ENCODE measurements at regions of chr11 and their contacts with region 1.

Region 1: DNA sequence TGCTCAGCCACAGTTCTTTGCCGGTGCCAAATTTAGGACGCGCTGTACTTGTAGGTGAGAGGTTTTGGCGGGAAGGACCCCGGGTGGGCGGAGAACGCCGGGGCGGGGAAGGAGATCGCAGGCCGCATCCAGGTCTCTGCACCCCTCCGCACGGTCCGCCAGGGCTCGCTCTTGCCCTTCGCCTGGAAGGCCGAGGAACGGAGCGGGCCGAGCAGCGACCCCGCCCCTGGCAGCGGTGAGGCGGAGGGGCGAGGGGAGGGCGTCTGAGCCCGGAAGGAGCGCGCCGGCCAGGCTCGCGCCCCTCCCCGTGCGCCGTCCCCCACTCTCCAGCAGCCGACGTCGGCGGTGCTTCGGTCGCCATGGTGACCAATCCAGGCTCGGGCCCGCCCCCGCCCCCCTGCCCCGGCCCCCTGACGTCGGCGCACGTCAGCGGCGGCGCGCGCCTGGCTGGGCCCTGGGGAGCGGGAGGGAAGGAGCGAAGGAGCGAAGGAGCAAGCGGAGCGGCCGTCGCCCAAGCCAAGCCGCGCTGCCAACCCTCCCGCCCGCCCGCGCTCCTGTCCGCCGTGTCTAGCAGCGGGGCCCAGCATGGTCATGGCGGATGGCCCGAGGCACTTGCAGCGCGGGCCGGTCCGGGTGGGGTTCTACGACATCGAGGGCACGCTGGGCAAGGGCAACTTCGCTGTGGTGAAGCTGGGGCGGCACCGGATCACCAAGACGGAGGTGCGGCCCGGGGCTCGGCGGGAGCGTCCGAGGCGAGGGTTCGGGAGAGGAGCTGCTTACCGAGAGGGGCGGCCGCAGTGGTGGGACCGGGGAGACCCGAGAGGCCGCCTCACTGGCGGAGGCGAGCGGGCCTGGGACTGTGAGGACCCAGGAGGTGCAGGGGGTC is at the start of gene SIK2:
- DNase-seq: peak; percentile 93
- H3K4me3 Mint-ChIP-seq: peak within 1 kb of the TSS; percentile 97
- H3K27ac Mint-ChIP-seq: peak within 1 kb of the TSS; percentile 95
- H3K4me1 Mint-ChIP-seq: peaks cover 16% of the 10 kb centered on the region
- H3K27me3 Mint-ChIP-seq: no peaks in the 10 kb centered on the region
- CTCF ChIP-seq: peak; percentile 60
- total RNA-seq, gene SIK2: 10.3 and 13.9 TPM in 2 replicates

Region 2: DNA sequence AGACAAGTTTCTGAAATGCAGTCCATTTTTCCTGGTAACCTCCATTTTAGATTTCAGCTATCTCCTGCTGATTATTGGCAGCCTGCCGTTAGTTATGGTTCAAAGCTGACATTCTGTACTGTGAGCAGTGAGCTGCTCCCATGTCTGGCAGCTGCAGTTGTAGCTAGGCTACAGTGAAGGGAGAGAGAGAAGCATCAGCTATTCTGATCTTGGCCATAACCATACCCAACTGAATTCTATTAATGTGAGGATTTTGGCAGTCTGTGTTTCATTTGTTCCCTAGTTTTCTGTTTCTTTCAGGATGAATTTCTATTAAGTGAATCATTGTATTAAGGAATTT is 33.5 kb after region 1 on chr11:
- CTCF ChIA-PET with region 1: no interaction called
- intact Hi-C with region 1: loop called (anchors 2 kb)
- DNase-seq: no peak
- H3K4me3 Mint-ChIP-seq: no peak overlapping the region
- H3K27ac Mint-ChIP-seq: no peak overlapping the region
- H3K4me1 Mint-ChIP-seq: peaks cover 52% of the 10 kb centered on the region
- H3K27me3 Mint-ChIP-seq: no peaks in the 10 kb centered on the region
- CTCF ChIP-seq: no peak

Region 3: DNA sequence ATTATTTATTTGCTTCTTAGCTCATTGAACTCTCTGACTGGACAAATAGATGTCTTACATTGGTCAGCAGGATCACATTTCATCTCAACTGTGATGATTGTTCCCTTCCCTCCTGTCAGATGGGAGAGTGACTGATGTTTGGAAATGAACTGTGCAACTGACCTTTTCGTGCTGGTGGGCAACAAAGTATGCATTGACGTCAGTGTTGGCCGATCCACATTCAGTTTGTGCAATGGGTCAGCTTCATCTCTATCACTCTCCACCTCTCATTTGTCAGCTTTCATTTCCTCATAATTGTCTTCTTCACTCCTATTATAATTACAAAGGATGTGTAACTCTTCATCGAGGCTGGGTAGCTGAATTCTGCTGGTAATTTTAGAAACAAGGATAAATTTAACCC is 92.6 kb after region 1 on chr11:
- CTCF ChIA-PET with region 1: no interaction called
- intact Hi-C with region 1: loop called (anchors 5 kb)
- DNase-seq: peak; percentile 25
- H3K4me3 Mint-ChIP-seq: no peak overlapping the region
- H3K27ac Mint-ChIP-seq: no peak overlapping the region
- H3K4me1 Mint-ChIP-seq: peaks cover 21% of the 10 kb centered on the region
- H3K27me3 Mint-ChIP-seq: no peaks in the 10 kb centered on the region
- CTCF ChIP-seq: no peak

Region 4: GRCh38 chr11:111707039-111707690 is 104.9 kb after region 1 on chr11:
- CTCF ChIA-PET with region 1: no interaction called
- intact Hi-C with region 1: loop called (anchors 5 kb)
- DNase-seq: peak; percentile 31
- H3K4me3 Mint-ChIP-seq: no peak overlapping the region
- H3K27ac Mint-ChIP-seq: no peak overlapping the region
- H3K4me1 Mint-ChIP-seq: peaks cover 15% of the 10 kb centered on the region
- H3K27me3 Mint-ChIP-seq: no peaks in the 10 kb centered on the region
- CTCF ChIP-seq: no peak

Region 5: DNA sequence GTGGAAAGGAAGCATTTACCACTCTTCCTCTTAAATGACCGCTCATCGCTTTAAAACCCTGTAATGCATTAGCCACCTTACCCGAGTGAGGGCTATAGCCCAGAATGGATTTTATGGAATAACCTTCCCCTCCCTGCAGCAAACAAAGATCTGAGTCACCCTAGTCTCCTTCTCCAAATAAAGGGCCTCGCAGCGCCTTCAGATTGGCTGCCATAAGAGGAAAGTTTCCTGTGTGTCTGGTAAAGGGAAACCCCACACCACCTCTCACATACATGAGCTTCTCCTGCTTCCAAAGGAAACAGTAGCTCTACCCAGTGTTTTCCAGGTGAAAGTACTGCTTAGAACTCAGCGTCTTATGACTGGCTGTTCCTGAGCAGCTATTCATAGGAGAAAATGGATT is 116.2 kb after region 1 on chr11:
- CTCF ChIA-PET with region 1: interaction called, 3 read pairs
- intact Hi-C with region 1: loop called (anchors 5 kb)
- DNase-seq: peak; percentile 44
- H3K4me3 Mint-ChIP-seq: no peak overlapping the region
- H3K27ac Mint-ChIP-seq: peak overlapping the region; percentile 21
- H3K4me1 Mint-ChIP-seq: peaks cover 18% of the 10 kb centered on the region
- H3K27me3 Mint-ChIP-seq: no peaks in the 10 kb centered on the region
- CTCF ChIP-seq: no peak

Region 6: DNA sequence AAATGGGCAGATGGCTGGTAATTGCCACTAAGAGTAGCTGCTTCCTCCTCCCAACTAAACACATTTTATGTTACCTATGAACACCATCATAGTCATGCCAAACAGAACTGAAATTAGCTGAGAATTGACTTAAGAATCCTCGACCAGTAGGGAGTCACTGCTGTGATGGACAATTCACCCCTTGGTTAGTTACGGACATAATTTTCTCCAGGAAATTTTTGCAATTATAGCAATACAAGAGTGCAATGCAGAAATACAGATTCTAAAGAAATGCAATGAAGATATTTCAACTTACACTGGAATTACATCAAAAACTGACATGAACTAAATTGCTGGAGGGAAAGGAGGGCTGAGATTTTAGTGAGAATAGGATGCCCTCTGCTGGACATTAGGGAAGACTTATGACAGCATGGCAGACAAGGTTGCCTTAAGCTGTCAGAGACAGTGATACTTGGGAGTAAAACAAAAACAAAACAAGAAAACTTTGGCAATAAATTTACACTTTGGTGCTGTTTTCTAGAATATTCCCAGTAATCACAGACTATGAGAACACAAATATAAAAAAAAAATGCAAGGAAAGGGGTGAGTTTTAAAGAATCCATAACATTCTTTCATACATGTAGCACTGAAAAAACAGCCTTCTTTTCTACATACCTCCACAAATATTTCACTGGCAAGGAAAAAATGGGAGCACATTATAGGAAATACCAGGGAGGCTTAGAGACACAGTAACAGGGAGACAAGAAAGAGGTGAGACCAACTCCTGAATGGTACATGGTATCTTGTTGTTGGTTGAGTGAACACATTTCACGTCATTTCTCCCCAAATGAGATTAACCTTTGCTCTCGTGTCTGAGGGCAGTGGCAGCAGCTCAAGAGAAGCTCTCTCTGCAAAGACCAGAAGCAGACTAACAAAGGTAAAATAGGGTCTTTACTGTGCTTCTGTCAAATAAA is 175.1 kb after region 1 on chr11:
- CTCF ChIA-PET with region 1: interaction called, 10 read pairs
- intact Hi-C with region 1: loop called (anchors 1 kb)
- DNase-seq: peak; percentile 23
- H3K4me3 Mint-ChIP-seq: no peak overlapping the region
- H3K27ac Mint-ChIP-seq: no peak overlapping the region
- H3K4me1 Mint-ChIP-seq: peaks cover 15% of the 10 kb centered on the region
- H3K27me3 Mint-ChIP-seq: no peaks in the 10 kb centered on the region
- CTCF ChIP-seq: peak; percentile 28

Region 7: DNA sequence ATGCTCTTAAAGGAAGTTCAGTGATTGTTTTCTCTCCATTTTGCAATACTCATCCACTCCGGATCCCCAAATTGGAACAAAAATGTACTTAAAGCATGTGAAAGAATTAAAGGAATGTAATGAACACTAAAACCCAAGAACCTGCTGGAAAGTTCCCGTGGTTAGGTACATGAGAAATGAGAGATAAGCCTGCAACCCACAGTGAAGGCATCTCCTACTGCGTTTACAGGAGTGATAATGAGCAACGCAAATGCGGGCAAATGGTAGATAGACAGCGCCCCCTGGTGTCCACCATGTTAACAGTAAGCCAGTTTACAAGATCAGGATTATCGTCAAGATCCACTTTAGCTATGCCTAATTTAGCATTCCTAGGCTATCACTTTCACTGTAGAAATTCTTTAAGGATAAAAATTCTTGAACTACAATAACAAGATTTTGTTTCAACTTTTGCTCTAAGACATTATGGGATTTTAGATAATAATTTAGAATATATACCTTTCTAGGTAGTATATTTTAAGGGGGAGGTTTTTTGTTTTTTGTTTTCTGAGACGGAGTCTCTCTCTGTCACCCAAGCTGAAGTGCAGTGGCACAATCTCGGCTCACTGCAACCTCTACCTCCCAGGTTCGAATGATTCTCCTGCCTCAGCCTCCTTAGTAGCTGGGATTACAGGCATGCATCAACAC is 239.3 kb after region 1 on chr11:
- CTCF ChIA-PET with region 1: no interaction called
- intact Hi-C with region 1: loop called (anchors 1 kb)
- DNase-seq: peak; percentile 78
- H3K4me3 Mint-ChIP-seq: no peak overlapping the region
- H3K27ac Mint-ChIP-seq: no peak overlapping the region
- H3K4me1 Mint-ChIP-seq: peaks cover 10% of the 10 kb centered on the region
- H3K27me3 Mint-ChIP-seq: no peaks in the 10 kb centered on the region
- CTCF ChIP-seq: peak; percentile 79

Measured in Calu3 (cell line).